CD8-positive, alpha-beta T cell (primary cell): ENCODE measurements at regions of chr4 and their contacts with region 1.

Region 1: DNA sequence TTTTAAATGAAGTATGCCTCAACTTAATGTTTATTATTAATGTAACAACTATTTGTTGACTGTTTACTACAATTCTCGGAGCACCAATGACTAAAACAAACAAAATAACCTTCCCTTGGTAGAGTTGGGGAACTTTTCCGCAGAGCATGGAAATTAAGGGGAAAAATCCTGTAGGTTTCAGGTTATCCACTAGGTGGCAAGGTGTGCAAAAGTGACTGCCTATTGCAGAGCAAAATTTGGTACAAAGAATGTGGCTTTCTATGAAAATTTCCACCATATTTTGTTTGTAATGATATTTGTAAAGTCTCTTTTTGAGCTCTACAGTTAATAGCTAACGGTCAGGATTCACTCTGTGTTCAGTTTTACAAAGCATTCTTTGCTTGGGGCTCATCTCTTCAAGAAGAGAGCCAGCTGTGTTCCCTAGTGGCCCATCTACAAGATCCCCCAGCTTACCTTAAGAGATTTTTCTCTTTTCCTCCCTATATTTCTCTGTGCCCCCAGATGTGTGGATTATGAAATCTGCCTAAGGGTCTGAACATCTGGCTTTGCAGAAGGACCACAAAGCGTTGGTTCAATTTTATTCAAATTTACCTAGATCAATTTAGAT is 61.1 kb downstream of the FBXO8 start:
- DNase-seq: peak in 3 of 9 experiments; percentile 16 to 46 (median 30)
- ATAC-seq: peak; percentile 65
- H3K4me3 ChIP-seq: no peak overlapping the region
- H3K4me3 Mint-ChIP-seq: no peak overlapping the region
- H3K27ac ChIP-seq: no peak overlapping the region
- H3K27ac Mint-ChIP-seq: no peak overlapping the region
- H3K4me1 ChIP-seq: peaks cover 10% of the 10 kb centered on the region
- H3K4me1 Mint-ChIP-seq: peaks cover 13% of the 10 kb centered on the region
- H3K27me3 ChIP-seq: peaks cover 12 to 15% of the 10 kb centered on the region in 2 experiments
- H3K27me3 Mint-ChIP-seq: peaks cover 37% of the 10 kb centered on the region
- CTCF ChIP-seq: peak; percentile 78

Region 2: GRCh38 chr4:174173360-174173759 is 49.0 kb before region 1 on chr4:
- CTCF ChIA-PET with region 1: no interaction called
- POLR2A ChIA-PET with region 1: no interaction called
- intact Hi-C with region 1: no loop called
- DNase-seq: no peak
- ATAC-seq: no peak
- H3K4me3 ChIP-seq: no peak overlapping the region
- H3K4me3 Mint-ChIP-seq: no peak overlapping the region
- H3K27ac ChIP-seq: no peak overlapping the region
- H3K27ac Mint-ChIP-seq: no peak overlapping the region
- H3K4me1 ChIP-seq: no peaks in the 10 kb centered on the region
- H3K4me1 Mint-ChIP-seq: no peaks in the 10 kb centered on the region
- H3K27me3 ChIP-seq: no peaks in the 10 kb centered on the region
- H3K27me3 Mint-ChIP-seq: peaks cover 18% of the 10 kb centered on the region
- CTCF ChIP-seq: no peak

Region 3: GRCh38 chr4:174318829-174319764 is 96.7 kb after region 1 on chr4:
- CTCF ChIA-PET with region 1: interaction called, 15 read pairs
- POLR2A ChIA-PET with region 1: interaction called, 4 read pairs
- intact Hi-C with region 1: loop called (anchors 1 kb)
- DNase-seq: peak in 2 of 9 experiments; percentile 38 to 59
- ATAC-seq: no peak
- H3K4me3 ChIP-seq: no peak overlapping the region
- H3K4me3 Mint-ChIP-seq: no peak overlapping the region
- H3K27ac ChIP-seq: no peak overlapping the region
- H3K27ac Mint-ChIP-seq: no peak overlapping the region
- H3K4me1 ChIP-seq: no peaks in the 10 kb centered on the region
- H3K4me1 Mint-ChIP-seq: no peaks in the 10 kb centered on the region
- H3K27me3 ChIP-seq: no peaks in the 10 kb centered on the region
- H3K27me3 Mint-ChIP-seq: no peaks in the 10 kb centered on the region
- CTCF ChIP-seq: peak; percentile 84

Region 4: DNA sequence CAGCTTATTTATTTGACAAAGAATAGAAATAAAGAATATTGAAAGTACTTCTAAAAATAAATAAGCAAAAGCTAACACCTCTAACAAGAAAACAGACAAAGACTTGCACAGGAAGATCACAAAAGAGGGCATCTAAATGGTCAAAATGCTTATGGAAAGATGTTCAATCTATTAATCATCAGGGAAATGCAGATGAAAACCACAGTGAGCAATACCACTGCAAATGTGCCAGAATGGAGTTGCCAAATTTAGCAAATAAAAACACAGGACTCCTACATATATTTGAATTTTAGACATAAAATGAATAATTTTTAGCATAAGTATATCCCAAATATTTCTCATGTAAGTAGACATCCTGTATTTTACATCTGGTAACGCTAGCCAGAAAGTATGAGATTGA is 356.0 kb after region 1 on chr4:
- CTCF ChIA-PET with region 1: no interaction called
- POLR2A ChIA-PET with region 1: no interaction called
- intact Hi-C with region 1: no loop called
- DNase-seq: no peak
- ATAC-seq: no peak
- H3K4me3 ChIP-seq: no peak overlapping the region
- H3K4me3 Mint-ChIP-seq: no peak overlapping the region
- H3K27ac ChIP-seq: no peak overlapping the region
- H3K27ac Mint-ChIP-seq: no peak overlapping the region
- H3K4me1 ChIP-seq: no peaks in the 10 kb centered on the region
- H3K4me1 Mint-ChIP-seq: no peaks in the 10 kb centered on the region
- H3K27me3 ChIP-seq: no peaks in the 10 kb centered on the region
- H3K27me3 Mint-ChIP-seq: no peaks in the 10 kb centered on the region
- CTCF ChIP-seq: no peak